H1 (cell line): ENCODE measurements at regions of chr15 and their contacts with region 1.

Region 1: GRCh38 chr15:57340682-57341259 is 35.5 kb upstream of the CGNL1 start:
- DNase-seq: no peak
- H3K4me3 ChIP-seq: no peak overlapping the region
- H3K27ac ChIP-seq: no peak overlapping the region
- H3K4me1 ChIP-seq: peaks cover 0 to 2% (median 0%) of the 10 kb centered on the region in 4 experiments; a peak in 2 of 7 replicates
- H3K27me3 ChIP-seq: no peaks in the 10 kb centered on the region
- CTCF ChIP-seq: peak; percentile 35 to 90 (median 79)
- EP300 ChIP-seq: no peak
- POLR2A ChIP-seq: no peak
- RAD21 ChIP-seq: peak; percentile 100

Region 2: GRCh38 chr15:57245130-57245529 is 95.6 kb before region 1 on chr15:
- CTCF ChIA-PET with region 1: no interaction called
- POLR2A ChIA-PET with region 1: no interaction called
- DNase-seq: no peak
- H3K4me3 ChIP-seq: no peak overlapping the region
- H3K27ac ChIP-seq: no peak overlapping the region
- H3K4me1 ChIP-seq: no peaks in the 10 kb centered on the region
- H3K27me3 ChIP-seq: no peaks in the 10 kb centered on the region
- CTCF ChIP-seq: no peak
- EP300 ChIP-seq: no peak
- POLR2A ChIP-seq: no peak
- RAD21 ChIP-seq: no peak

Region 3: DNA sequence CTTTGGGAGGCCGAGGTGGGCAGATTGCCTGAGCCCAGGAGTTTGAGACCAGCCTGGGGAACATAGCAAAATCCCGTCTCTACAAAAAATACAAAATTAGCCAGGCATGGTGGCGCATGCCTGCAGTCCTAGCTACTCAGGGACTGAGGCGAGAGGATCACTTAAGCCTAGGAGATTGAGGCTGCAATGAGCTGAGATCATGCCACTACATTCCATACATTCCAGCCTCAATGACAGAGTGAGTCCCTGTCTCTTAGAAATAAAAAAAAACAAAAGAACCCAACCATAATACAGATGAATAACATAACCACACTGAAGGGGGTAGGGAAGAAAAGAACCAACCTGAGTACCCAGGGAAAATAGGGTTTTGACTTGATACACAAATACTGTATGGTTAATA is 15.9 kb after region 1 on chr15:
- CTCF ChIA-PET with region 1: interaction called, 56 read pairs
- POLR2A ChIA-PET with region 1: interaction called, 3 read pairs
- DNase-seq: no peak
- H3K4me3 ChIP-seq: peak overlapping the region in 1 of 4 experiments; percentile 11; a peak in 1 of 8 replicates
- H3K27ac ChIP-seq: 0 out of 2 replicates have a peak overlapping the region, but pooled peaks have one; percentile 8
- H3K4me1 ChIP-seq: peaks cover 2 to 28% (median 13%) of the 10 kb centered on the region in 4 experiments; a peak in 5 of 7 replicates
- H3K27me3 ChIP-seq: no peaks in the 10 kb centered on the region
- CTCF ChIP-seq: no peak
- EP300 ChIP-seq: no peak
- POLR2A ChIP-seq: no peak; a peak in 1 of 3 replicates
- RAD21 ChIP-seq: no peak

Region 4: GRCh38 chr15:57375827-57376695 is 35.3 kb after region 1 on chr15 and contains the start of gene CGNL1:
- CTCF ChIA-PET with region 1: interaction called, 33 read pairs
- POLR2A ChIA-PET with region 1: interaction called, 3 read pairs
- DNase-seq: peak in 1 of 2 experiments; percentile 77
- H3K4me3 ChIP-seq: peak within 1 kb of the TSS; percentile 59 to 66 (median 64)
- H3K27ac ChIP-seq: no peak within 1 kb of the TSS
- H3K4me1 ChIP-seq: peaks cover 10 to 23% (median 18%) of the 10 kb centered on the region in 4 experiments; a peak in 6 of 7 replicates
- H3K27me3 ChIP-seq: peaks cover 0 to 10% (median 5%) of the 10 kb centered on the region in 4 experiments; a peak in 4 of 7 replicates
- CTCF ChIP-seq: no peak
- EP300 ChIP-seq: no peak
- POLR2A ChIP-seq: no peak; a peak in 1 of 3 replicates
- RAD21 ChIP-seq: no peak
- total RNA-seq, gene CGNL1: 72.7 and 75.6 TPM in 2 replicates

Region 5: DNA sequence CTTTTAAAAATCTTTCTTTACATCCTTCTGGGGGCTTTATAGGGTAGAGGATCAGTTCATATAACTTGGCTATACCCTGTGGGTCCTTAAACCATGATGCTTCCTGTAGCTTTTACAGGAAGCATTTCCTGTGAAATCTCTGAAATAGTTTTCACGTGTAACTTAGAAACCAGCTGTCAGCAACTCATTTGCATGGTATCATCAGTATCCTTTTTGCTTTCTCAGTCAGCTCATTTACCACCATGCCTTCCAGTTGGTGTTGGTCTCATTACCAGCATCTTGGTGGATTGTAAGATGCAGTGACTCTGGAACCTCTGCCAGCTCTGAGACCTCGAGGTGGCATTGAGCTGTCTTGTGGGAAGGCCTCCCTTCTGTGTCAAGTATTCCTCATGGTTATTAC is 154.3 kb after region 1 on chr15:
- CTCF ChIA-PET with region 1: interaction called, 170 read pairs
- POLR2A ChIA-PET with region 1: interaction called, 3 read pairs
- DNase-seq: peak in 1 of 2 experiments; percentile 1
- H3K4me3 ChIP-seq: no peak overlapping the region
- H3K27ac ChIP-seq: no peak overlapping the region
- H3K4me1 ChIP-seq: no peaks in the 10 kb centered on the region; a peak in 2 of 7 replicates
- H3K27me3 ChIP-seq: no peaks in the 10 kb centered on the region
- CTCF ChIP-seq: no peak
- EP300 ChIP-seq: no peak
- POLR2A ChIP-seq: no peak
- RAD21 ChIP-seq: no peak

Region 6: DNA sequence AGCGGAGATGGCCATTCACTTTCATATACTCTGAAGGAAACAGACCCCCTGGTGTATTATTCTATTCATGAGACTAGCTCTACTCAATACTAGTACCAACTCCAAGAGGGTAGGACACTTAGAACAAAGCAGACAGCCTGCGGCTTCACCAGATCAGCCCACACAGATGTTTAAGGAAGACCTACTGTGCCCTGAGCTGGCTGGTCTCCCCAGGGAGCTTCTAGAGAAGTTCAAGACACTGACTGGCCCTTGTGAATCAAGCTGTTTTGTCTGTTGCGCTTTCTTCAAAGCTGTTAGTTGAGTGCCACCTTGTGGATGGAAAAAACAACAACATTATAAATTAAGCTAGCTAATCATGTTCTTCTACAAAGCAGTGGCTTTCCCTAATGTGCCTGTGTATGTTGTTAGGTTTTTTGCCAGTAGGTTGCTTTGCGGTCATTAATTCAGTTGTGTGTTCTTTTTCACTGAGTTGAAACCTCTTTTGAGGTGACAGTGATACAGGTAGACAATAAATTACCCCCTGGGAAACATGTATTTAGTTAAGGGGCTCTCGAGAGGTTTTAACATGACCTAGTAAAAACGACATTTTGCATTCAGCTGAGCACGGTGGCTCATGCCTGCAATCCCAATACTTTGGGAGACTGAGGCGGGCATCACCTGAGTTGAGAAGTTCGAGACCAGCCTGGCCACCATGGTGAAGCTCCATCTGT is 186.8 kb after region 1 on chr15:
- CTCF ChIA-PET with region 1: interaction called, 302 read pairs
- POLR2A ChIA-PET with region 1: interaction called, 4 read pairs
- DNase-seq: peak; percentile 50 to 63
- H3K4me3 ChIP-seq: no peak overlapping the region
- H3K27ac ChIP-seq: no peak overlapping the region
- H3K4me1 ChIP-seq: peaks cover 0 to 5% (median 0%) of the 10 kb centered on the region in 4 experiments; a peak in 1 of 7 replicates
- H3K27me3 ChIP-seq: no peaks in the 10 kb centered on the region
- CTCF ChIP-seq: peak in 2 of 3 experiments; percentile 62 to 67; a peak in 3 of 4 replicates
- EP300 ChIP-seq: no peak
- POLR2A ChIP-seq: no peak
- RAD21 ChIP-seq: peak; percentile 88 to 89

Region 7: GRCh38 chr15:57561041-57561711 is 220.4 kb after region 1 on chr15:
- CTCF ChIA-PET with region 1: interaction called, 15 read pairs
- POLR2A ChIA-PET with region 1: no interaction called
- DNase-seq: peak in 1 of 2 experiments; percentile 73
- H3K4me3 ChIP-seq: no peak overlapping the region
- H3K27ac ChIP-seq: no peak overlapping the region
- H3K4me1 ChIP-seq: peaks cover 1 to 4% (median 2%) of the 10 kb centered on the region in 4 experiments; a peak in 3 of 7 replicates
- H3K27me3 ChIP-seq: no peaks in the 10 kb centered on the region
- CTCF ChIP-seq: peak; percentile 68 to 96 (median 87)
- EP300 ChIP-seq: no peak
- POLR2A ChIP-seq: no peak
- RAD21 ChIP-seq: peak; percentile 81 to 88